Activated naive CD8-positive, alpha-beta T cell treated with anti-CD3 and anti-CD28 coated beads, Interleukin-2, amount 10 ng/mL, durations not matched to agents 7 days and 5 days (primary cell): ENCODE measurements at regions of chr6 and their contacts with region 1.

Region 1: GRCh38 chr6:29748391-29749307 is 25.4 kb downstream of the HLA-F start:
- DNase-seq: peak; percentile 83
- ATAC-seq: peak; percentile 79
- H3K4me3 Mint-ChIP-seq: peak overlapping the region; percentile 99
- H3K27ac Mint-ChIP-seq: peak overlapping the region; percentile 93
- H3K4me1 Mint-ChIP-seq: peaks cover 48% of the 10 kb centered on the region
- H3K27me3 Mint-ChIP-seq: peaks cover 2% of the 10 kb centered on the region

Region 2: DNA sequence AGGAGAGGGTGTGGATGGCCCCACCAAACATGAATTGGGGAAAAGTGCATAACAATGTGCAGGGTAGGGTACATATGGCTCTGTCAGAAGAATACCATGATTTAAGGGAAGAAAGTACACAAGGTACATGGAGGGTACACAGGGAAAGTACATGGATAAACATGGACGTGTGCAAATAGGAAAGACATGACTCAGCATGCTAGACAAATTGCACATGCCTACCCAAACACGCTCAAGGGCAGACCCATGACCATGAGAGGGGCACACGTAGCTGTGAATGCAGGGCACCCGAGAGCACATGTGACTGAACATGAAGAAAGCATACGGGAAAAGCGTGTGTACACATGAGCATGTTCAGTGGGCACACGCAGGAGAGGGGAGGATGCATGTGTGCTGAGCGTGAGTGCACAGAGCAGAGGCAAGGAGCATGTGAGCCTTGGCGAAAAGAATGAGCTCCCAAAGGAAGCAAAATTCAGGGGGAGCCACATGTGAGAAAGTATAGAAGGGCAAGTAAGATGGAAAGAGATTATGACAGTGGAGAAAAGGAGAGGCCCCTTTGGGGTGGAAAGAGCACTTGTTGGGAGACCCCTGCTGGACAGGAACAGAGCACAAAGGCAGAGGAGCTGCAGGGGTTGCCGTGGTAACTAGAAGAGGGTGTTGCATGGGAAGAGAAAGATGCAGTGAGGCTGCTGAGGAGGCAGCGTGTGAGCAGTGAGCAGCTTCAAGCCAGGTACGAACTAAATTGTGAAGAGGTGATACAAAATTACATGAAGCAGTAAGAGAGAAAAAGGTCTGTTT is 145.9 kb before region 1 on chr6:
- POLR2A ChIA-PET with region 1: no interaction called
- DNase-seq: no peak
- ATAC-seq: no peak
- H3K4me3 Mint-ChIP-seq: no peak overlapping the region
- H3K27ac Mint-ChIP-seq: no peak overlapping the region
- H3K4me1 Mint-ChIP-seq: no peaks in the 10 kb centered on the region
- H3K27me3 Mint-ChIP-seq: no peaks in the 10 kb centered on the region

Region 3: DNA sequence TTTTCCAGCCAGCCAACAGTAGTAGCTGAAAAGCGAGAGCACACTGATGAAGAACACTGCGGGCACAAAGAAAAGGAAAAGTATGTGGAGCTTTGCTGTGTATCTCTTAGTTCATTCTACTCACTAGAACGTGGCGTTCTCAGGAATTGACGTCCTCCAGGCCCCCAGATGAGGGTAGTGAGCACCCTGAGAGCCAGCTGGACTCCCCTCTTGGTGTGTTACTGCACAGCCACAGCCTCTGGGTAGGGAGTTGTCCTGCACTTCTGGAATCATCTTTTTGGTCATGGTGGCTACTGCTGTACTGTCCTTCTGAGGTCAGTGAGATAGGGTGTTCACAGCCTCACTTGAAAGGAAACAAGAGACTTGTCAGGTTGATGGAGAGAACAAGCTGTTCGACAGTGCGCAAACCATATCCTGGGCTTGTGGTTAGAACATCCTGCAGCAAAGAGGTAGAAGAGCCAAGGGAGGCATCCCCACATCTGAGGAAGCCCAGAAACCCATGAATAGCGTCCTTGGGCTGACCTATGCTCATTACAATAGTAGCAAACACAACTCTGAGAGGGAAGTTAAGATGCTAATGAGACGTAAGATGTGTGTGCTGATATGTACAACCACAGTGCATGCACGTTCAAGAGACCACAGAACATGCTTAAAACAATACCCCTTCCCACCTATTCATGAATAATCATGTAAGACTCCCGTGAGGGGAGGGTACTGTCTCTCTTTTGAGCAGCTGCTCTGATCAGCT is 40.0 kb before region 1 on chr6:
- POLR2A ChIA-PET with region 1: interaction called, 27 read pairs
- DNase-seq: peak; percentile 57
- ATAC-seq: peak; percentile 90
- H3K4me3 Mint-ChIP-seq: peak overlapping the region; percentile 89
- H3K27ac Mint-ChIP-seq: peak overlapping the region; percentile 96
- H3K4me1 Mint-ChIP-seq: peaks cover 63% of the 10 kb centered on the region
- H3K27me3 Mint-ChIP-seq: peaks cover 3% of the 10 kb centered on the region

Region 4: GRCh38 chr6:29724937-29725869 is 23.4 kb before region 1 on chr6:
- POLR2A ChIA-PET with region 1: interaction called, 17 read pairs
- DNase-seq: no peak
- ATAC-seq: no peak
- H3K4me3 Mint-ChIP-seq: peak overlapping the region; percentile 94
- H3K27ac Mint-ChIP-seq: peak overlapping the region; percentile 86
- H3K4me1 Mint-ChIP-seq: peaks cover 41% of the 10 kb centered on the region
- H3K27me3 Mint-ChIP-seq: no peaks in the 10 kb centered on the region